CD8-positive, alpha-beta T cell (primary cell): ENCODE measurements at regions of chr20 and their contacts with region 1.

Region 1: DNA sequence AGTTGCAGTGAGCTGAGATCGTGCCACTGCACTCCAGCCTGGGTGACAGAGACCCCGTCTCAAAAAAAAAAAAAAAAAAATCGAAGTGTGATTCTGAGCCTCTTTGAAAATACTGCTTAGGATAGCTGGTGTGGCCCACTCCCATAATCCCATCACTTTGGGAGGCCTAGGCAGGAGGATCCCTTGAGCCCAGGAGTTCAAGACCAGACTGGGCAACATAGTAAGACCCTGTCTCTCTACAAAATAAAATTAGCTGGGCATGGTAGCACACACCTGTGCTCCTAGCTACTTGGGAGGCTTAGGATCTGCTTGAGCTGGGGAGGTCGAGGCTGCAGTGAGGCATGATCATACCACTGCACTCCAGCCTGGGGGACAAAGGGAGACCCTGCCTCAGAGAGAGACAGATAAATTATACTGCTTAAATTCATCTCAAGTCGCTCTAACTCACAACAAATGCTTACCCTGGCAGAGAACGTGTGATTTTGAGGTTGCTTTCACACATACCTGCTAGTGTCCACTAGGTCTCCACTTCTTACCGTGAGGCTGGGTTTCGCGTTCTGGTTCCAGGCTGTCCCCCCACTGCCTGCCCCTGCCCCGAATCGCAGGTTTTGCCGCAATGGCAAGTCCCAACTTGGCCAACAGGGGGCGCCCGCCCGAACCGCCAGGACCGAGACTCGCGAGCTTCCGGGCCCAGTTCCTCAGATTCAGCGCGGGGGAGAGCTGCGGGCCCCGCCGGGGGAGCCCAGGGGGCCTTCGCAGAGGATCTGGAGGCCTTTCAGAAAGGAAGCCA is 12.3 kb upstream of the TMC2 start:
- DNase-seq: peak; percentile 86 to 97 (median 91)
- ATAC-seq: peak; percentile 84
- H3K4me3 ChIP-seq: peak overlapping the region; percentile 90 to 91
- H3K4me3 Mint-ChIP-seq: peak overlapping the region; percentile 89
- H3K27ac ChIP-seq: peak overlapping the region; percentile 47 to 58
- H3K27ac Mint-ChIP-seq: peak overlapping the region; percentile 60
- H3K4me1 ChIP-seq: peaks cover 10% of the 10 kb centered on the region
- H3K4me1 Mint-ChIP-seq: peaks cover 12% of the 10 kb centered on the region
- H3K27me3 ChIP-seq: no peaks in the 10 kb centered on the region
- H3K27me3 Mint-ChIP-seq: no peaks in the 10 kb centered on the region
- CTCF ChIP-seq: peak; percentile 92

Region 2: DNA sequence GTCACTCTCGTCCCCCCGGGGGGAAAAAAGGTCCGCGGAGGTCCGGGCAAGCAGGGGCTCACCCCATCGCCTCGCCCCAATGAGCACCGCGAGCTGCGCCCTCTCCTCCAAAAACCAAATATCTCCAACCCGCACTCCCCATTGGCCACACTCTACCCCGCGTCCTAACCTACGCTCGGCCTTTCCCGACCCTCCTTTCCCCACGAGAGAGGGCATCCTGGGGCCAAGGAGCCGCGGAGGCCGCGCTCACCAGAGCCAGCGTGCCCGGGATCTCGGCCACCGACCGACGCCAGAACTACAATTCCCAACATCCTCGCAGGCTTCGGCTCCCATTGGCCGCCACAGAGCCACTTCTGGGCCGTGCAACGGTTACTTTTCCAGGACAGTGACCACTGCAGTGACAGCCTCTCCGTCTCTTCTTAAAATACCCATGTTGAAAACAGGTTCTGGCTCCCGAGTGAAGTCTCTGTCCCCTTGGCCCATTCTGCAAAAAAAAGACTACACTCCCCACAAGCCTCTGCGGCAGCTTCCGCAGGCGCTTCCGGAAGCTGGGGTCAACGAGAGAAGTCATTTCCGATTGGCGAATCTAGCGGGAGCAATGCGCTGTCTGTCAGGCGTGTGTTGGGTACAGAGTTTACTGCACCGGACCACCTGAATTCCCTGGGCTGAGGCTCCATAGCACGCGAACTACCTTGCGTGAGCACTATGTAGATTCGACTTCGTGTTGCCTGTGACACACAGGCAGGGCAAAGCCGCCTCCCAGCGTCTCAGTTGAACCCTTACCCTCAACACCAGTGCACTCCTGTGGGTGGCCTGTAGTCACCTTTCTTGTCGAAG is 15.3 kb before region 1 on chr20 and contains the start of gene ZNF343:
- CTCF ChIA-PET with region 1: interaction called, 34 read pairs
- POLR2A ChIA-PET with region 1: interaction called, 3 read pairs
- intact Hi-C with region 1: loop called (anchors 1 kb)
- DNase-seq: peak; percentile 52 to 89 (median 75)
- ATAC-seq: peak; percentile 93
- H3K4me3 ChIP-seq: peak within 1 kb of the TSS; percentile 85 to 95
- H3K4me3 Mint-ChIP-seq: peak within 1 kb of the TSS; percentile 96
- H3K27ac ChIP-seq: peak within 1 kb of the TSS; percentile 30 to 80
- H3K27ac Mint-ChIP-seq: peak within 1 kb of the TSS; percentile 94
- H3K4me1 ChIP-seq: peaks cover 13% of the 10 kb centered on the region
- H3K4me1 Mint-ChIP-seq: peaks cover 29% of the 10 kb centered on the region
- H3K27me3 ChIP-seq: no peaks in the 10 kb centered on the region
- H3K27me3 Mint-ChIP-seq: peaks cover 8% of the 10 kb centered on the region
- CTCF ChIP-seq: no peak
- total RNA-seq, gene ZNF343: 3.9 to 4.9 TPM

Region 3: GRCh38 chr20:2671977-2672376 is 147.9 kb after region 1 on chr20:
- CTCF ChIA-PET with region 1: interaction called, 6 read pairs
- POLR2A ChIA-PET with region 1: no interaction called
- intact Hi-C with region 1: loop called (anchors 2 kb)
- DNase-seq: no peak
- ATAC-seq: no peak
- H3K4me3 ChIP-seq: no peak overlapping the region
- H3K4me3 Mint-ChIP-seq: no peak overlapping the region
- H3K27ac ChIP-seq: no peak overlapping the region
- H3K27ac Mint-ChIP-seq: no peak overlapping the region
- H3K4me1 ChIP-seq: no peaks in the 10 kb centered on the region
- H3K4me1 Mint-ChIP-seq: no peaks in the 10 kb centered on the region
- H3K27me3 ChIP-seq: no peaks in the 10 kb centered on the region
- H3K27me3 Mint-ChIP-seq: peaks cover 7% of the 10 kb centered on the region
- CTCF ChIP-seq: no peak